ENCODE measurements at regions of chr9 and their contacts with region 1.

Region 1: GRCh38 chr9:121825031-121825691 is 173.7 kb downstream of the DAB2IP start:
- DNase-seq: peak; percentile 11
- H3K4me3 ChIP-seq: no peak overlapping the region
- H3K27ac ChIP-seq: no peak overlapping the region
- H3K4me1 ChIP-seq: no peaks in the 10 kb centered on the region
- H3K27me3 ChIP-seq: no peaks in the 10 kb centered on the region
- CTCF ChIP-seq: no peak
- POLR2A ChIP-seq: no peak

Region 2: DNA sequence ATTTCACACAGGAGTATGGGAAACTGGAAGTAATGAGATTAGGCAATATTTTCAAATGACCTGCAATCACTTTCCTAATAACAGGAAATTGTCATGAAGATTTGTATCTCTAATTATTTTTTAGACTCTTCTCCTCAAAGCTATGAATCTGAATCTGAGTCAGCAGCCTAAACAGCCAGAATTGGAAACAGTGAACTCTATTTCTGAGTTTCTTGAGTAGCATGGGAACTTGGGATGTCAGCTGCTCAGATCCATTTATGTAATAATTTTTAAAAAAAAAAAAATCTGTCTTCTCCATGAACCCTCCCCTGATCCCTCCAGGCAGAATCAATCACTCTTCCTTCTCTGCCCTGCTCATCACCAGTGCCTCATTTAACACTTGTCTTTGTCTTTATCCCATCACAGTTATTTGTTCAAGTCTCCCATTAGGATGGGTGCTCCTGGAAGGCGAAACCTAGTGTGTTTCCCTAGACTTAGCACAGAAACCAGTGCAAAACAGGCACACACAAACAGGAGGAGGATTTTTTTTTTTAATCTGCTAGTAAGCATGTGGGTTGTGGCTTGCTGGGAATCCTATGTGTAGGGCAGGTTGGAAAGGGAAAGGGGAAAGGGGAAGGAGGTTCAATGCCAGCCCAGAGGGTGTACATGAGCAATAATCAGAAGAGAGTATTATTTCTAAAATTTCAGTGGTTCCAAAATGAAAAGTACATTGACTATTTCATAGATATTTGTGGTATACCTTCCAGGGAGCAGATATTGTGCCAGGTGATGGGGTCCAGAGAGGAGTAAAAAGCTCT is 81.1 kb after region 1 on chr9:
- intact Hi-C with region 1: loop called (anchors 5 kb)
- DNase-seq: no peak
- H3K4me3 ChIP-seq: no peak overlapping the region
- H3K27ac ChIP-seq: no peak overlapping the region
- H3K4me1 ChIP-seq: no peaks in the 10 kb centered on the region
- H3K27me3 ChIP-seq: no peaks in the 10 kb centered on the region
- CTCF ChIP-seq: no peak
- POLR2A ChIP-seq: no peak

Measured in testis (tissue), 5 donors.